ENCODE measurements at regions of chr9 and their contacts with region 1.

Region 1: DNA sequence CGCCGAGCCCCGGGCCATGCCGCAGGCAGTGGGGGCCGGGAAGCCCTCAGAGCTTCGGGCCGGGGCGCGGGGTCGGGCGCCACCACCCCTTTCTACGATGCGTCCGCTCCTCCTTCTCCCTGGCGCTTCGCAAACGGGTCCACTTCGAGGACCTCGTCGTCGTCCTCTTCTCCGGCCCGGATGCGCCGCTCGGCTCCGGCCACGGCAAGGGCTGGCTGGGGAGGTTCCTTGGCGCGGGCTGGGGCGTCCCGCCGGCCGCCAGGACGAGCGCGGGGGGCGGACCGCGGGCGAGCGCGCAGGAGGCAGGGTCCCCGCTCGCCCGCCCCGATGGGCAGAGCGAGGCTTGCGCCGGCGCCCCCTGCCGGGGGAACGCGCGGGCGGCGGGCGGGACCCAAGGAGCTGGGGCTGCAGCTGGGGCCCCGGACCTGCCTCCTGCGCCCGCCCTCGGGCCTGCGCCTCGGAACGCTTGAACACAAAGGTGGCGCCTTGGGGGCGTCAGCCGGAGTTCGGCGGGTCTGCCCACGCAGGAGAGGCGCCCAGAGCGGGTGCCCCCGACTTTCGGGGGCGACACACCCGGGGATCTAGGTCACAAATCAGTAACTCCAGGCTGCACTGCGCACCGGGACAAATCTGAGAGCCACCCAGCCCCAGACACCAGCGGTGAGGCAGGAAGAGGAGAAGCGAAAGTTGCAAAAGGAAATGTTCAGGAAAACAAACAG is at the start of gene ROR2:
- DNase-seq: peak; percentile 66
- H3K4me3 ChIP-seq: peak within 1 kb of the TSS; percentile 14 to 31 (median 23)
- H3K27ac ChIP-seq: no peak within 1 kb of the TSS
- H3K4me1 ChIP-seq: peaks cover 20% of the 10 kb centered on the region
- H3K27me3 ChIP-seq: peaks cover 33% of the 10 kb centered on the region
- CTCF ChIP-seq: peak; percentile 26 to 40
- total RNA-seq, gene ROR2: 0.66 to 8.7 TPM

Region 2: DNA sequence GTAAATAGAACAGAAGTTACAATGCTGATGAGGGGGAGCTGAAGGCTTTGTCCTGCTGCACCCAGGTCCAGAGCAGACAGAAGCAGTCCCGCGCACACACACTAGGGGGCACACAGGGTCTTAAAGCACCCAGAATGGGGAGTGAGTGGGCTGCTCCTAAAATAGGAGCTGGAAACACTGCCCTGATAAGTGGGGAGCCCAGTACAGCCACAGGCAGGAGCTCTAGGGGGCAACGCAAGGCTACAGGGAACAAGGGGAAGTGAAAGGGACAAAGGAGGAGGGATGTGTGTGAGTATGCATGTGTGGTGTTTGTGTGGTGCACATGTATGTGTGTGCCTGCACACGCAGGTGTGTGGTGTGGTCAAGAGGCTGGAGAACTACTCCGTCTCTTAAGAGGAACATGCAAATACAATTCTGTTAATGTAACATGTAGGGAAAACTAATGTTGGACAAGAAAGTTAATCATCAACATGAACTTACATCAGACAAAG is 191.6 kb before region 1 on chr9:
- CTCF ChIA-PET with region 1: no interaction called
- dilution Hi-C with region 1: no loop called
- in situ Hi-C with region 1: no loop called
- intact Hi-C with region 1: loop called (anchors 1 kb)
- DNase-seq: peak; percentile 29
- H3K4me3 ChIP-seq: no peak overlapping the region
- H3K27ac ChIP-seq: no peak overlapping the region
- H3K4me1 ChIP-seq: no peaks in the 10 kb centered on the region
- H3K27me3 ChIP-seq: no peaks in the 10 kb centered on the region
- CTCF ChIP-seq: peak; percentile 76

Region 3: DNA sequence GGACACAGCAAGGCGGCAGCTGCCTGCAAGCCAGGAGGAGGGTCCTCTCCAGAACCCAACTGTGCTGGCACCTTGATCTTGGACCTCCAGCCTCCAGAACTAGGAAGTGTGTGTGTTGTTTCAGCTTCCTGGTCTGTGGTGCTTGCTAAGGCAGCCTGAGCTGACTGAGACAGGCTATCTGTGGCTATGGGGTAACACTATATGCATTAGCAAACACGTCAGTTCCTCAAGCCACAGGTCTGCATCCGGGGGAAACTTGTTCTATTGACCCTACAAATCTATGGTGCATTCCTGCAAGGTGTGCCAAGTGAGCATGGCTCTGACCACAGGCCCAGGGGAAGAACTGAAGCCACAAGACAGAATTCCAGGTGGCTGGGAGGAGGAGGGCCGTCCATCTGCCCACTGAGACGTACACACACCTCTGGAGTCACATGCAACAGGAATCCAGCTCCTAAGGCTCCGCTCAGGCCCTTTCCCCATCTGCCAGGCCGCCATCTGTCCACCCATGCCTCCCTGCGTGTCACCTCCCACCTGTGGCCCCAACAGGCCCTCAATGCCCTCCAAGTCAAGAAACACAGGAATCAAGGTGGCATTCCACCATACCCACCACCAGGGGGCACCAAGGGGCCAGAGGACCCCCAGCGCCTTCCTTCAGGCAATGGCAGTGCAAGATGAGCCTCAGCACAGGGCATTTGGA is 174.9 kb before region 1 on chr9:
- CTCF ChIA-PET with region 1: no interaction called
- dilution Hi-C with region 1: no loop called
- in situ Hi-C with region 1: no loop called
- intact Hi-C with region 1: loop called (anchors 1 kb)
- DNase-seq: peak; percentile 37
- H3K4me3 ChIP-seq: no peak overlapping the region
- H3K27ac ChIP-seq: no peak overlapping the region
- H3K4me1 ChIP-seq: peaks cover 23% of the 10 kb centered on the region
- H3K27me3 ChIP-seq: no peaks in the 10 kb centered on the region
- CTCF ChIP-seq: peak; percentile 70 to 81

Region 4: DNA sequence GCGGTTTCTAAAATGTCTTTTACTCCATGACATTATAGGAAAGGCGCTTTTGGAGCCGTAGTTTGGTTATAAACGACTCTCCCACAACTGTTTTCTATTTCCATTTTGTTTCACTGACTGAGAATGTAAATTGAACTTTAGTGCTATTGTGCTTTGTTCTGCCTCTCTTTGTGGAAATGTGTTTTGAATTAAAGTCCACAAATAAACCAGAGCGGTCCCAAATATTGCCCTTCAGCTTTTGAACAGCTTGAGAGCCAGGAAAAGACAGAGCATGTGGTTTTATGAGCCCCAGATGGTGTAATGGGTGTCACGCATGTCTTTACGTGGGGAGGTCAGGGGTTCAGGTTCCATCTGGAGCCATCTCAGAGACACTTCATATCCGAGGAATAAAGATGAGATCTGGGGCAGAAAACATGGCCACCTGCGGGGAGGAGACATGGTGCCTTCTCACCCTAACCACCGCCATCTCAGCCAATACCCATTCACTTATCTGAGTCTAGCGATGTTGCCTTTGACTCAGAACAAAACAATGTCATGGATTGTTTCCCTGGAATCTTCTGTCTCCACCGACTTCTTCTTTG is 42.4 kb after region 1 on chr9:
- CTCF ChIA-PET with region 1: no interaction called
- dilution Hi-C with region 1: no loop called
- in situ Hi-C with region 1: no loop called
- intact Hi-C with region 1: no loop called
- DNase-seq: no peak
- H3K4me3 ChIP-seq: no peak overlapping the region
- H3K27ac ChIP-seq: no peak overlapping the region
- H3K4me1 ChIP-seq: no peaks in the 10 kb centered on the region
- H3K27me3 ChIP-seq: peaks cover 7% of the 10 kb centered on the region
- CTCF ChIP-seq: no peak

Region 5: GRCh38 chr9:92029553-92029952 is 79.4 kb after region 1 on chr9:
- CTCF ChIA-PET with region 1: no interaction called
- dilution Hi-C with region 1: no loop called
- in situ Hi-C with region 1: no loop called
- intact Hi-C with region 1: loop called (anchors 10 kb)
- DNase-seq: no peak
- H3K4me3 ChIP-seq: no peak overlapping the region
- H3K27ac ChIP-seq: no peak overlapping the region
- H3K4me1 ChIP-seq: peaks cover 3% of the 10 kb centered on the region
- H3K27me3 ChIP-seq: no peaks in the 10 kb centered on the region
- CTCF ChIP-seq: peak in 1 of 2 donors; percentile 31

Region 6: DNA sequence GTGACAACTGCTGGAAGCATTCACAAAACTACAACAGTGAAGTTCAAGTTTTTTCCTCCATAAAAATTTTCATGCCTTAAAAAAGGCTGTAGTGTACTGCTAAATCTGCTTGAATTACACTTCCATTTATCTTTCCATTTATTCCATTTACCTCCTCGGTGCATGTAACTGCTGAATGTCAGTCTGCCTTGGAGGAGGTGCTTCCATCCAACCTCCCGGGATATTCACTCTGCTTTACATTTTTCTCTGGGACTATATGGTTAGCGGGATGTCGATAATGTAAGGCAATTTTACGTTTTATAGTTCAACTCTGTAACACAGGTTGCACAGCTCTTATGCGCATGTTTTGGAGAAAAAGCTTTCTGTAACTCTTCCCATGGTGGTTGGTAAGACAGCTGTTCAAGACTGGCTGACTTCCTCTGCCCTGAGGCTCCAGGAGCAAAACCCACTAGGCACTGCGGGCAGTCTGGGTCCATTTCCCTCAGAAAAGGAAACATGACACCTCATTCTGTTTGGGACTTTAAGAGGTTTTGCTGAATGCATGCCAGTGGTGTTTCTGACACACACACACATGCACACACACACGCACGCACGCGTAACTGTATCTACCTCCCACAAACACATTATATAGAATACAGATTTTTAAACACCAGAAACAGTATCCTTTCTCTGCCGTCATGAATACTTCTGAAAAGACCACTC is 99.0 kb after region 1 on chr9:
- CTCF ChIA-PET with region 1: no interaction called
- dilution Hi-C with region 1: no loop called
- in situ Hi-C with region 1: no loop called
- intact Hi-C with region 1: loop called (anchors 5 kb)
- DNase-seq: no peak
- H3K4me3 ChIP-seq: no peak overlapping the region
- H3K27ac ChIP-seq: no peak overlapping the region
- H3K4me1 ChIP-seq: no peaks in the 10 kb centered on the region
- H3K27me3 ChIP-seq: no peaks in the 10 kb centered on the region
- CTCF ChIP-seq: no peak

Region 7: GRCh38 chr9:92115071-92115858 is 165.2 kb after region 1 on chr9 and contains the start of gene SPTLC1:
- CTCF ChIA-PET with region 1: no interaction called
- dilution Hi-C with region 1: no loop called
- in situ Hi-C with region 1: no loop called
- intact Hi-C with region 1: loop called (anchors 2 kb)
- DNase-seq: peak; percentile 92
- H3K4me3 ChIP-seq: peak within 1 kb of the TSS; percentile 98 to 100 (median 100)
- H3K27ac ChIP-seq: peak within 1 kb of the TSS; percentile 90
- H3K4me1 ChIP-seq: peaks cover 3% of the 10 kb centered on the region
- H3K27me3 ChIP-seq: no peaks in the 10 kb centered on the region
- CTCF ChIP-seq: no peak
- total RNA-seq, gene SPTLC1: 76.6 to 152 TPM

Region 8: GRCh38 chr9:92308893-92309292 is 358.8 kb after region 1 on chr9:
- CTCF ChIA-PET with region 1: no interaction called
- dilution Hi-C with region 1: no loop called
- in situ Hi-C with region 1: no loop called
- intact Hi-C with region 1: no loop called
- DNase-seq: no peak
- H3K4me3 ChIP-seq: no peak overlapping the region
- H3K27ac ChIP-seq: no peak overlapping the region
- H3K4me1 ChIP-seq: peaks cover 11% of the 10 kb centered on the region
- H3K27me3 ChIP-seq: no peaks in the 10 kb centered on the region
- CTCF ChIP-seq: no peak

Measured in mammary epithelial cell (primary cell).